CD8-positive, alpha-beta T cell (primary cell): ENCODE measurements at regions of chr1 and their contacts with region 1.

Region 1: DNA sequence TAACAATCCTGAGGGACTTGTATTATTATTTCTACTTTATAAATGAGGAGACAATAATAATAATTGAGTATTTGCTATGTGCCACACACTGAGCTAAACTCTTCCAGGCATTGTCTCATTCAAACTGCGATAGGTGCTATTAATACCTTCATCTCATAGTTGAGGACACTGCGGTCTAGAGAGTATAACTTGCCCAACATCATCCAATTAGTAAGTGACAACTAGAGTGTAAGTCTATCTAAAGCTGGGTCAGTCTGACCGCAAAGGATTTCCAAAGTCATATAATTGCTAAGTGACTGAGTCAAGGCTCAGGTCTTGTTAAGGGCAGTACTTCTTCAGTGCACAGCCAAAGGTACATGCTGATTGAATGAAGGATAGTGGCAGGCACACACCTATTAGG is 9.7 kb downstream of the BCL9 start:
- DNase-seq: no peak
- ATAC-seq: no peak
- H3K4me3 ChIP-seq: no peak overlapping the region
- H3K4me3 Mint-ChIP-seq: no peak overlapping the region
- H3K27ac ChIP-seq: no peak overlapping the region
- H3K27ac Mint-ChIP-seq: no peak overlapping the region
- H3K4me1 ChIP-seq: peaks cover 12% of the 10 kb centered on the region
- H3K4me1 Mint-ChIP-seq: peaks cover 29% of the 10 kb centered on the region
- H3K27me3 ChIP-seq: no peaks in the 10 kb centered on the region
- H3K27me3 Mint-ChIP-seq: peaks cover 14% of the 10 kb centered on the region
- CTCF ChIP-seq: no peak

Region 2: GRCh38 chr1:147264158-147264768 is 286.8 kb before region 1 on chr1:
- CTCF ChIA-PET with region 1: no interaction called
- POLR2A ChIA-PET with region 1: no interaction called
- intact Hi-C with region 1: no loop called
- DNase-seq: no peak
- ATAC-seq: no peak
- H3K4me3 ChIP-seq: no peak overlapping the region
- H3K4me3 Mint-ChIP-seq: no peak overlapping the region
- H3K27ac ChIP-seq: no peak overlapping the region
- H3K27ac Mint-ChIP-seq: no peak overlapping the region
- H3K4me1 ChIP-seq: no peaks in the 10 kb centered on the region
- H3K4me1 Mint-ChIP-seq: no peaks in the 10 kb centered on the region
- H3K27me3 ChIP-seq: no peaks in the 10 kb centered on the region
- H3K27me3 Mint-ChIP-seq: no peaks in the 10 kb centered on the region
- CTCF ChIP-seq: no peak

Region 3: DNA sequence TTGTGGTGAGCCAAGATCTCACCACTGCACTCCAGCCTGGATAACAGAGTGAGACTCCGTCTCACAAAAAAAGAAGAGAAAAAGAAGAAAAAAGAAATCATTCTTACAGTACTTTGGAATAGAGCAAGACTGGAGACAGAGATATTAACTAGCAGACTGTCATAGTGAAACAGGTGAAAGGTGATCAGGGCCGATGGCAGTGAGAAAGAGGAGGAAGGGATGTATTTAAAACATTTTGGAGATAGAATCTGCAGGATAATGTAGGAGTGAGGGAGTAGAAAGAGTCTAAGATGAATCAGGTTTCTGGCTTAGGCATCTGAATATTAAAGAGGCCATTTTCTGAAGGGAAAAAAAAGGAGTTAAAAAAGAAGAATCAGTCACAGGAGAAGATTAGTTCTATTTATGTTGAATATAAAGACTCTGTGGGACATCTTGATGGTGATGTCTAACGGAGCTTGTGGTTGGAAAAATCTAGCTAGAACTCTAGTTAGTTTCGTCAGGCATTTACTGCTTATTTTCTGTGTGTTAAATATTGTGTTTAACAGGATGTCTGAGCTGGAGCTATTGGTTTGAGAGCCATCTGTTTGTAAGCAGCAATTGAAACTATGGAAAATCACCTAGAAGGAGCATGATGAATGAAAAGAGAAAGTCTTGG is 18.7 kb after region 1 on chr1:
- CTCF ChIA-PET with region 1: interaction called, 4 read pairs
- POLR2A ChIA-PET with region 1: no interaction called
- intact Hi-C with region 1: loop called in 1 of 2 experiments (anchors 2 kb)
- DNase-seq: no peak
- ATAC-seq: no peak
- H3K4me3 ChIP-seq: no peak overlapping the region
- H3K4me3 Mint-ChIP-seq: no peak overlapping the region
- H3K27ac ChIP-seq: no peak overlapping the region
- H3K27ac Mint-ChIP-seq: no peak overlapping the region
- H3K4me1 ChIP-seq: no peaks in the 10 kb centered on the region
- H3K4me1 Mint-ChIP-seq: peaks cover 9% of the 10 kb centered on the region
- H3K27me3 ChIP-seq: no peaks in the 10 kb centered on the region
- H3K27me3 Mint-ChIP-seq: peaks cover 13% of the 10 kb centered on the region
- CTCF ChIP-seq: no peak